K562 (cell line): ENCODE measurements at regions of chr1 and their contacts with region 1.

Region 1: DNA sequence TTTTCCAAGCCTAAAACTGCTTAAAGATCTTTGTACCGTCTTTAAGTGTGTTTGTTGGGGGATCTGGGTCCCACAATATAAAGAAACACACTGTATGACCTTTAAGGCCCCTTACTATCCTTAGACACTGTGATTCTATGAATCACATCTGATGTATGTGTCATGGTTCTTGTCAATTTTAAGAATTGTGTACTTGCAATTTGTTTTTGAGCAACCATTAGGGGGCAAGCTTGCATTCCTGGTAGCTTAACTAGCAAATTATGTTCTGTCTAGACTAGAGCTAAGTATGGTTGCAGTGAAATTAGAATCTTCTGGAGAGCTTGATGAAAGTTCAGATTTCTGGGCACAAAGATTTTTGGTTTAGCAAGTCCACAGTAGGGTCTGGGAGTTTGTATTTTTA is 219.5 kb downstream of the TPR start:
- DNase-seq: peak in 2 of 4 experiments; percentile 30 to 60
- ATAC-seq: peak; percentile 88
- H3K4me3 ChIP-seq: no peak overlapping the region
- H3K27ac ChIP-seq: no peak overlapping the region
- H3K4me1 ChIP-seq: no peaks in the 10 kb centered on the region
- H3K27me3 ChIP-seq: no peaks in the 10 kb centered on the region
- CTCF ChIP-seq: peak; percentile 59 to 80 (median 65); a peak in 5 of 6 replicates
- EP300 ChIP-seq: no peak
- POLR2A ChIP-seq: no peak
- RAD21 ChIP-seq: peak; percentile 89 to 95

Region 2: GRCh38 chr1:185813401-185813979 is 342.1 kb before region 1 on chr1:
- CTCF ChIA-PET with region 1: no interaction called
- POLR2A ChIA-PET with region 1: no interaction called
- in situ Hi-C with region 1: no loop called
- intact Hi-C with region 1: loop called (anchors 5 kb)
- DNase-seq: peak; percentile 13 to 69 (median 18)
- ATAC-seq: peak; percentile 91
- H3K4me3 ChIP-seq: no peak overlapping the region
- H3K27ac ChIP-seq: no peak overlapping the region
- H3K4me1 ChIP-seq: no peaks in the 10 kb centered on the region
- H3K27me3 ChIP-seq: no peaks in the 10 kb centered on the region
- CTCF ChIP-seq: peak; percentile 44 to 75 (median 44); a peak in 4 of 6 replicates
- EP300 ChIP-seq: no peak
- POLR2A ChIP-seq: no peak
- RAD21 ChIP-seq: peak; percentile 69 to 84

Region 3: GRCh38 chr1:185996211-185996610 is 159.4 kb before region 1 on chr1:
- CTCF ChIA-PET with region 1: no interaction called
- POLR2A ChIA-PET with region 1: no interaction called
- in situ Hi-C with region 1: no loop called
- intact Hi-C with region 1: loop called (anchors 2 kb)
- DNase-seq: no peak
- ATAC-seq: no peak
- H3K4me3 ChIP-seq: no peak overlapping the region
- H3K27ac ChIP-seq: no peak overlapping the region
- H3K4me1 ChIP-seq: no peaks in the 10 kb centered on the region
- H3K27me3 ChIP-seq: no peaks in the 10 kb centered on the region
- CTCF ChIP-seq: no peak
- EP300 ChIP-seq: no peak
- POLR2A ChIP-seq: no peak
- RAD21 ChIP-seq: no peak

Region 4: DNA sequence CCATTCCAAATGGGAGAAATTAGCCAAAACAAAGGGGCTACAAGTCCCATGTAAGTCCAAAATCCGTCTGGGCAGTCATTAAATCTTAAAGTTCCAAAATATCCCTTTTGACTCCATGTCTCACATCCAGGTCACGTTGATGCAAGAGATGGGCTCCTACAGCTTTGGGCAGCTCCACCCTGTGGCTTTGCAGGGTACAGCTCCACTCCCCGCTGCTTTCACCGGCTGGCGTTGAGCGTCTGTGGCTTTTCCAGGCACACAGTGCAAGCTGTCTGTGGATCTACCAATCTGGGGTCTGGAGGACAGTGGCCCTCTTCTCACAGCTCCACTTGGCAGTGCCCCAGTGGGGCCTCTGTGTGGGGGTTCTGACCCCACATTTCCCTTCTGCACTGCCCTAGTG is 89.2 kb after region 1 on chr1:
- CTCF ChIA-PET with region 1: no interaction called
- POLR2A ChIA-PET with region 1: no interaction called
- in situ Hi-C with region 1: no loop called
- intact Hi-C with region 1: loop called (anchors 1 kb)
- DNase-seq: peak in 1 of 4 experiments; percentile 55
- ATAC-seq: peak; percentile 99
- H3K4me3 ChIP-seq: no peak overlapping the region
- H3K27ac ChIP-seq: no peak overlapping the region
- H3K4me1 ChIP-seq: no peaks in the 10 kb centered on the region
- H3K27me3 ChIP-seq: no peaks in the 10 kb centered on the region
- CTCF ChIP-seq: peak; percentile 52 to 61 (median 60)
- EP300 ChIP-seq: no peak
- POLR2A ChIP-seq: no peak
- RAD21 ChIP-seq: peak; percentile 42 to 76